ENCODE measurements at regions of chr19 and their contacts with region 1.

Region 1: GRCh38 chr19:35269421-35270117 is 807 bp downstream of the USF2 start:
- DNase-seq: peak; percentile 72 to 86
- ATAC-seq: peak; percentile 46 to 56
- H3K4me3 ChIP-seq: peak overlapping the region; percentile 65 to 98 (median 72)
- H3K27ac ChIP-seq: peak overlapping the region; percentile 95 to 100 (median 98)
- H3K4me1 ChIP-seq: peaks cover 17 to 31% of the 10 kb centered on the region in 2 donors
- H3K27me3 ChIP-seq: no peaks in the 10 kb centered on the region
- CTCF ChIP-seq: peak; percentile 41 to 95 (median 74)
- POLR2A ChIP-seq: peak; percentile 21 to 27

Region 2: DNA sequence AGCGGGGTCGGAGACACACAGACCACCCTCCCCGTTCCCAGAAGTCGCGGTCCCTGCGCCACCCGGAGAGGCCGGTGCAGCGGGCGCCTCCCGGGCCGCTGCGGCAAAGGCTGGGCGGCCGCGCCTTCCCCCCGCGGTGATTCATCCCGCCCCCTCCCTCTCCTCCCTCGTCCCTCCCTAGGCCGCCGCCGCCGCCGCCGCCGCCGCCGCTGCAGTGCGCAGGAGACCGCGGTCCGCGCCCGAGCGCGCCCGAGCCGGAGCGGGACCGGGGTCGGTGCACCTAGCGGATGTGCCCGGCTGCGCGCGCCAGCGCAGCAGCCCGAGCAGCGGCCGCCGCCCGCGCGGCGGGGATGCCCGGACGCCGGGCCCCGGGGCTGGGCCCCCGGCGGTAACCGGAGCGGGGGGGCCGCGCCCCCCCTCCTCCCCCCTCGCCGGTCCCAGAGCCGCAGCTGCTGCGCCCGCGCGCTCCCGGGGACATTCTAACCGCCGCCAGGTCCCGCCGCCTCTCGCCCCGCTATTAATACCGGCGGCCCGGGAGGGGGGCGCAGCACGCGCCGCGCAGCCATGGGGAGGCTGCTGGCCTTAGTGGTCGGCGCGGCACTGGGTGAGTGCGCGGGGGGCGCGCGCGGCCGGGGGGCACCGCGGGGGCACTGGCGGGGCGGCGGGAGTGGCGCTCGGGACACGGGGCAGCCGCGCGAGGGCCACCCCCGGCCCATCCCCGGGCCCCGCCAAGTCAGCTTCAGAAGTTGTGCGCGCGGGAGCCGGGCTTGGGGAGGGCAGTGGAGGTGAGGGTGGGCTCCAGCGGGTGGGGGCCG is 239.1 kb before region 1 on chr19 and contains the start of gene SCN1B:
- in situ Hi-C with region 1: no loop called
- intact Hi-C with region 1: loop called (anchors 5 kb)
- DNase-seq: peak; percentile 61 to 80
- ATAC-seq: peak; percentile 60 to 67
- H3K4me3 ChIP-seq: peak within 1 kb of the TSS; percentile 55 to 78 (median 68)
- H3K27ac ChIP-seq: peak within 1 kb of the TSS; percentile 97 to 98 (median 98)
- H3K4me1 ChIP-seq: peaks cover 61 to 62% of the 10 kb centered on the region in 2 donors
- H3K27me3 ChIP-seq: no peaks in the 10 kb centered on the region
- CTCF ChIP-seq: no peak
- POLR2A ChIP-seq: peak; percentile 74 to 81
- total RNA-seq, gene SCN1B: 194 to 469 (median 289) TPM

Region 3: GRCh38 chr19:35140962-35141637 is 128.5 kb before region 1 on chr19:
- in situ Hi-C with region 1: loop called in 1 of 4 experiments (anchors 10 kb)
- intact Hi-C with region 1: loop called (anchors 2 kb)
- DNase-seq: peak; percentile 92 to 94
- ATAC-seq: peak; percentile 44 to 51
- H3K4me3 ChIP-seq: peak overlapping the region; percentile 43 to 73 (median 64)
- H3K27ac ChIP-seq: peak overlapping the region; percentile 99 to 100 (median 99)
- H3K4me1 ChIP-seq: peaks cover 33 to 38% of the 10 kb centered on the region in 2 donors
- H3K27me3 ChIP-seq: no peaks in the 10 kb centered on the region
- CTCF ChIP-seq: peak; percentile 7 to 76 (median 54)
- POLR2A ChIP-seq: peak; percentile 88 to 94

Region 4: GRCh38 chr19:35213663-35214632 is 55.6 kb before region 1 on chr19:
- in situ Hi-C with region 1: no loop called
- intact Hi-C with region 1: loop called (anchors 2 kb)
- DNase-seq: peak; percentile 62 to 66
- ATAC-seq: peak; percentile 82 to 91
- H3K4me3 ChIP-seq: no peak overlapping the region
- H3K27ac ChIP-seq: peak overlapping the region; percentile 65 to 79 (median 78)
- H3K4me1 ChIP-seq: peaks cover 12 to 19% of the 10 kb centered on the region in 2 donors
- H3K27me3 ChIP-seq: no peaks in the 10 kb centered on the region
- CTCF ChIP-seq: no peak
- POLR2A ChIP-seq: peak in 1 of 2 donors; percentile 42

Region 5: DNA sequence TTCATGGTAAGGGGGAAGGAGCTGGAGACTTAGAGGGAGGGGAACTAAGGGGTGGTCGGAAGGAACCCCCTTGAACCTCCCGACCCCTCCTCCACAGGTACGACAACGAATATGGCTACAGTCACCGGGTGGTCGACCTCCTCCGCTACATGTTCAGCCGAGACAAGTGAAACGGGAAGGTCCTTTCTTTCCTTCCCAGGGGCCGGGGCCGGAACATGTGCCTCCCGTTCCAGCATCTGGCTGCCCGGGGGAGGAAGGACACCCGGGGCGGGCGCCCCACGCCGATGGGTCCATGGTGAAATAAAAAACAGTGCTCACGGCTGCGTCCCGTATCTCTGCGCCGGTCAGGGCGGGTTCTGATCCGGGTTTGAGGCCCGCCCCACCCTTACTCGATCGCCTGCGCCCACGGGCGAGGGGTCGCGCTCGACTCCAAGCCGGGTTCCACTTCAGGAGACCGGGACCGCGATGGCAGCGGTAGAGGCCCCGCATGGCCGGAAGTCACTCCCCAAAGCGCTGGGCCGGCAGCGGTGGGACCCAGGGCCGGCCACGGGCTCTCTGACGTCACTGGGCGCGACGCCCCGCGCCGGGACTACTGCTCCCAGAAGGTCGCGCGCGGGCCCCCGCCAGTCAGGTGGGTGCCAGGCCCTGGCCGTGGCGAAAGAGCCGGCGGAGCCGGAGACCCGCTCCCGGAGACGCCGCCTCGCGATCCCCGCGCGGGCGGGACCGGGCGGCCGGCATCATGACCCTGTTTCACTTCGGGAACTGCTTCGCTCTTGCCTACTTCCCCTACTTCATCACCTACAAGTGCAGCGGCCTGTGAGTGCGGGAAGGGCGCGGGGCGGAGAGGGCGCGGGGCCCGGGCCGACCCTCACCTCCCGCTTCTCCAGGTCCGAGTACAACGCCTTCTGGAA is 275.7 kb after region 1 on chr19 and contains the start of gene TMEM147:
- in situ Hi-C with region 1: no loop called
- intact Hi-C with region 1: loop called (anchors 2 kb)
- DNase-seq: peak; percentile 87
- ATAC-seq: peak; percentile 91 to 92
- H3K4me3 ChIP-seq: peak within 1 kb of the TSS; percentile 71 to 90 (median 80)
- H3K27ac ChIP-seq: peak within 1 kb of the TSS; percentile 80 to 89 (median 87)
- H3K4me1 ChIP-seq: peaks cover 18 to 25% of the 10 kb centered on the region in 2 donors
- H3K27me3 ChIP-seq: no peaks in the 10 kb centered on the region
- CTCF ChIP-seq: no peak
- POLR2A ChIP-seq: peak; percentile 63 to 70
- total RNA-seq, gene TMEM147: 86.2 to 145 (median 119) TPM

Region 6: DNA sequence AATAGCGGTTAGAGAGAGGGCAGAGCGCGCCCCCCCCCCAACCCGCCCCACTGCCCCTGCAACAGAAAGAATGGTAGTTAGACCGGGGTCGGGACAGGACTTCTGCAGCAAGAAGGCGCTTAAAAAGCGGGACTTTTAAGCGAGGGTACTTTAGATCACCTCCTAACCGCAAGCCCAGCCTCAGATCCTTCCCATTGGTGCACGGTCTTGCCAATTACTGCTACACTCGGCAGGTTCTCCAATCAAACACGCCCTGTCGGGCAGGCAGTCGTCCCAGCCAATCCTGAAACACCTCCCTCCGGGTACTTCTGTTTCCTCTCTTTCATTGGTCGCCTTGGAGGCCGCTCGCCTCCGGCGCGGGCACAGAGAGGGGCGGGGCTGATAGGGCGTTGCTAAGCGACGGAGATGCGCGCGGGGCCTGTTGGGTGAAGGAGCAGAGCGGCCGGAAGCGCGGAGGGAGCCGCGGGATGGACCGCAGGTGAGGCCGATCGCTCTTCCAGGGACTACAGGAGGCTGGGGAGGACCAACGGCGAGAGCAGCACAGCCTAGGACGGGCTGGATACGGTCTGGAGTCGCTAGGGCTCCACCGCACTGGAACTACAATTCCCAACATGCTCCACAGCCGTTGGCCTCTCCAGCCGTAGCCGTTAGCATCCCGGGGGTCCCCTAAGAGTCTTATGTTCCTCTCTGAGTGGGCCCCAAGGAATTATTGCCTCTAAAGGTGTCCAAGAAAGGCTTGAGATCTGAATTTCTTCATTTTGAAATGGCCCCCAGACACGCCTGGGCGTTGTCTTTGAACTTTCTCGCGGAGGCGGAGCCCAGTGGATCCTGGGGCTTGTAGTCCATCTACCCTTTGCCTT is 488.4 kb after region 1 on chr19 and contains the start of gene PROSER3:
- in situ Hi-C with region 1: no loop called
- intact Hi-C with region 1: loop called (anchors 5 kb)
- DNase-seq: peak; percentile 99 to 100
- ATAC-seq: peak; percentile 85 to 91
- H3K4me3 ChIP-seq: peak within 1 kb of the TSS; percentile 72 to 84 (median 76)
- H3K27ac ChIP-seq: peak within 1 kb of the TSS; percentile 89 to 97 (median 95)
- H3K4me1 ChIP-seq: peaks cover 28 to 43% of the 10 kb centered on the region in 2 donors
- H3K27me3 ChIP-seq: no peaks in the 10 kb centered on the region
- CTCF ChIP-seq: no peak
- POLR2A ChIP-seq: peak; percentile 56 to 82
- total RNA-seq, gene PROSER3: 0.63 to 4.3 (median 3.0) TPM